Dendritic cell treated with granulocyte-macrophage colony-stimulating factor and Interleukin-4, amounts not matched to agents 40 ng/mL and 50 ng/mL, for 4 days (primary cell): ENCODE measurements at regions of chr7 and their contacts with region 1.

Region 1: DNA sequence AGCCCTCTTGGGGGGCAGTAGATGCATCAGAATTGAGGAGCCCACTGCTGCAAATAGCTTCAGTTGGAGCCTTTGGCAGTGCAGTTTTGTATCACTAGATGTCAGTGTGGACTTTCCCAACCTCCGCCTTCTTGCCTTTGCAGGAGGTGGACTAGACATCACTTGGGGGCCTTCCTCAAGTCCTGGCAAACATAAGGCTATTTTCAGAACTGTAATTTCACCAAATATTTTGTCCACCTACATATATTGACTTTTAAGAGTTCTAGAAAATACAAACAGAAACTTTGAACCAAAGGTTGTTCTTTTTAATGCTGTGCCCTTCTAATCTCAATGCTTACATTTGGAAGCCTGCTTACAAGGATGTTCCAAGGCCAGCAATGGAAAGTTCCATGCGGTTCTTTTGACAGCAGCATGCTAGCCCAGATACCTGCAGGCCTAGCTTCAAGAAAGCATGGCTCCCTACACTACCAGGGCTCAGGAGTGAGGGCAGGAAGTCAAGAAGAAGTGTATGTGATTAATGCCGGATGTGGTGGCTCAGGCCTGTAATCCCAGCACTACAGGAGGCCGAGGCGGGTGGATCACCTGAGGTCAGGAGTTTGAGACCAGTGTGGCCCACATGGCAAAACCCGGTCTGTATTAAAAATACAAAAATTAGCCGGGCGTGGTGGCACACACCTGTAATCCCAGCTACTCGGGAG is 8.0 kb upstream of the ZNRF2 start:
- H3K4me3 Mint-ChIP-seq: no peak overlapping the region
- H3K27ac Mint-ChIP-seq: no peak overlapping the region
- H3K4me1 Mint-ChIP-seq: peaks cover 28% of the 10 kb centered on the region
- H3K27me3 Mint-ChIP-seq: no peaks in the 10 kb centered on the region

Region 2: DNA sequence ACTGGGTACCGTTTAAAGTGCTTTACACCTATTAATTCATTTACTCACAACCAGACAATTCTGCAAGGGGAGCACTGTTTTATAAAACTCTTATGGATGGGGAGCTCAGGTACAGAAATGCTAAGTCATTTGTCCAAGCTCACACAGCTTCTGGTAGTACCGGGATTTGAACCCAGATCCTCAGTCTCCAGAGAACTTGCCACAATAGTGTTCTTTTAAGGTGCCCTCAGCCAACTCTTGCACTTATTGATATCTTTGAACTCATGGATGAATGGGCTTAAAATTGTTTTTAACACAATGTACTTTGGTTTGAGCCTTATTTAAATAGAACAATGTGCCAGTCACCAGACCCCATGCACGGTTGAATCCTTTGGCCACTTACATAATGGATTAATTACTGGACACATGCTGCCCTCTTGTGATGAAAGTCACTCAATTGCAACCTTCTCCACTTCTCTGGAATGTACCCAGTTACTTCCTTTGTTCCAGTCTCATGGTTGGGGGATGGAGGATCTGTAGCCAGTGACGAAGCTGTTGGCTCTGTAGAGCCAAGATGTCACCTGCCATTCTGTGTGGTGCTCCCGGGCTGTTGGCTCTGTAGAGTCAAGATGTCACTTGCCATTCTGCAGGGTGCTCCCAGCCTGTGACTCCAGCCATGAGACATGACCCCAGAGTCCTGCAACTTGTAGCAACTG is 136.6 kb after region 1 on chr7:
- intact Hi-C with region 1: loop called (anchors 2 kb)
- H3K4me3 Mint-ChIP-seq: no peak overlapping the region
- H3K27ac Mint-ChIP-seq: no peak overlapping the region
- H3K4me1 Mint-ChIP-seq: peaks cover 18% of the 10 kb centered on the region
- H3K27me3 Mint-ChIP-seq: no peaks in the 10 kb centered on the region

Region 3: GRCh38 chr7:30659312-30659711 is 383.0 kb after region 1 on chr7:
- intact Hi-C with region 1: no loop called
- H3K4me3 Mint-ChIP-seq: no peak overlapping the region
- H3K27ac Mint-ChIP-seq: no peak overlapping the region
- H3K4me1 Mint-ChIP-seq: no peaks in the 10 kb centered on the region
- H3K27me3 Mint-ChIP-seq: peaks cover 7% of the 10 kb centered on the region